Right cardiac atrium (tissue), 5 donors: ENCODE measurements at regions of chr1 and their contacts with region 1.

Region 1: GRCh38 chr1:59266180-59266926 is 30.5 kb upstream of the FGGY start:
- DNase-seq: peak in 1 of 3 donors; percentile 45
- ATAC-seq: peak; percentile 42 to 64
- H3K4me3 ChIP-seq: no peak overlapping the region
- H3K27ac ChIP-seq: no peak overlapping the region
- H3K4me1 ChIP-seq: peaks cover 2% of the 10 kb centered on the region
- H3K27me3 ChIP-seq: no peaks in the 10 kb centered on the region

Region 2: GRCh38 chr1:59178339-59179187 is 87.8 kb before region 1 on chr1:
- intact Hi-C with region 1: loop called in 1 of 4 experiments (anchors 10 kb)
- DNase-seq: peak; percentile 81 to 93 (median 81)
- ATAC-seq: peak; percentile 93 to 97
- H3K4me3 ChIP-seq: no peak overlapping the region
- H3K27ac ChIP-seq: peak overlapping the region; percentile 34
- H3K4me1 ChIP-seq: no peaks in the 10 kb centered on the region
- H3K27me3 ChIP-seq: no peaks in the 10 kb centered on the region

Region 3: GRCh38 chr1:59204001-59204400 is 62.4 kb before region 1 on chr1:
- intact Hi-C with region 1: loop called in 1 of 4 experiments (anchors 2 kb)
- DNase-seq: peak; percentile 64 to 85 (median 78)
- ATAC-seq: peak; percentile 93 to 98
- H3K4me3 ChIP-seq: no peak overlapping the region
- H3K27ac ChIP-seq: peak overlapping the region; percentile 40
- H3K4me1 ChIP-seq: peaks cover 3% of the 10 kb centered on the region
- H3K27me3 ChIP-seq: no peaks in the 10 kb centered on the region